Activated naive CD4-positive, alpha-beta T cell treated with anti-CD3 and anti-CD28 coated beads for 36 hours (primary cell): ENCODE measurements at regions of chr1 and their contacts with region 1.

Region 1: GRCh38 chr1:203038891-203039608 is 12.8 kb downstream of the PPFIA4 start:
- DNase-seq: peak; percentile 82
- H3K4me3 Mint-ChIP-seq: no peak overlapping the region
- H3K27ac Mint-ChIP-seq: no peak overlapping the region
- H3K4me1 Mint-ChIP-seq: no peaks in the 10 kb centered on the region
- H3K27me3 Mint-ChIP-seq: peaks cover 2% of the 10 kb centered on the region

Region 2: GRCh38 chr1:203026031-203026989 is 12.7 kb before region 1 on chr1 and contains the start of gene PPFIA4:
- CTCF ChIA-PET with region 1: interaction called, 64 read pairs
- intact Hi-C with region 1: no loop called
- DNase-seq: peak; percentile 88
- H3K4me3 Mint-ChIP-seq: peak within 1 kb of the TSS; percentile 70
- H3K27ac Mint-ChIP-seq: peak within 1 kb of the TSS; percentile 32
- H3K4me1 Mint-ChIP-seq: peaks cover 10% of the 10 kb centered on the region
- H3K27me3 Mint-ChIP-seq: peaks cover 2% of the 10 kb centered on the region
- total RNA-seq, gene PPFIA4: 4.5 to 6.5 TPM

Region 3: DNA sequence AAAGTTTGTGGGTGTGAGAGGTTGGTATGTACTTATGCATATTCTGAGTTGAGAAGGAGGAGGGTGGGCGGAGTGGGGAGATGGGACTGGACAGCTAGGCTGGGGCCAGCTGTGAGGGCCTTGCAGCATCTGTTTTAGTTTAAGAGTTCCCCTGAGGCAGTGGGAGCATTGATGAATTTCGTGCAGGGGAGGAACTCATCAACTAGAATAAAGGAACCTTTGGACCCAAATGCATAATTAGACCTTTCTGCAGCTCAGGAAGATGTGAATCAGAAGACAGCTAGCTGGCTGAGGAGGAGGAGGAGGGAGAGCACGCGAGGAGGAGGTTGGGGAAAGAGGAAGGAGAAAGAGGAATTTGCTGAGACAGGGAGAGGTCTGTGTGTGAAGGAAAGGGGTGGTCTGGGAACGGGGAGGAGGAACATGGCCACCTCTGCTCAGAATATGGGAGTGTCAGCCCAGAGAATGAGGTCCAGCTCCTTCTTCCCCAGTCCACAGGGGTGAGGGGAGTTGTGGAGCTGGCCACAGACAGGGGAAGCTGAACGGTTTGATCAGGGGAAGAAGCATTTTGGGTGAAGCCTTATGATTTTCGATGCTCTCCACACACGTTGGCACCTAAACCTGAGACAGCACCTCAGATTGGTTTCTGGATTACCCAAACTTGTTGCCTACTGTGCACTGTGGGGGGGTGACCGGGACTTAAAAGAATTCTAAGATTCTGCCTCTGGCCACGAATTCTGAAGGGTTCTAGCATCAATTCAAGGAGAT is 19.0 kb after region 1 on chr1:
- CTCF ChIA-PET with region 1: interaction called, 24 read pairs
- intact Hi-C with region 1: no loop called
- DNase-seq: no peak
- H3K4me3 Mint-ChIP-seq: no peak overlapping the region
- H3K27ac Mint-ChIP-seq: no peak overlapping the region
- H3K4me1 Mint-ChIP-seq: no peaks in the 10 kb centered on the region
- H3K27me3 Mint-ChIP-seq: no peaks in the 10 kb centered on the region

Region 4: DNA sequence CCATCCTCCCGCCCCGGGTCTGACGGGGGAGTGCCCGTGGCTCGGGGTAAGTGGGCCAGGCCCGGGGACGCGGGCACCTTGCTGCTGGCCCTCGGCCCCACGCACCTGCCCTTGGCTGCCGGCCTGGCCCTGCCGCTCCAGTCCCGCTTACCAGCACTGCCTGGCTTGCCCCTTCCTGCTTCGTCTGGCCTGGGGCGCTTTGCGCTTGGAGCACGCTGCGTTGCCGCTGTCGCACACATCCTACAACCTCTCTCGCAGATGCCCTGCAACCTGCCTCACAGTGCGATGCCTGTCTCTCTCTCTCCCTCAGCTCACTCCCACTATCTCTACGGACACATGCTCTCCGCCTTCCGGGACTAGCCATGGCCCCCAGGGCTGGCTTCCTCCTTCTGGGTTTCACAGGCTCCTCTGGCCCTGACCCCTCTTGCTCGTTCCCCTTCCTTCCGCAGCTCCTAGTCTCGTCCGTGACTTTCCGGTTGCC is 37.0 kb after region 1 on chr1:
- CTCF ChIA-PET with region 1: interaction called, 10 read pairs
- intact Hi-C with region 1: no loop called
- DNase-seq: no peak
- H3K4me3 Mint-ChIP-seq: peak overlapping the region; percentile 5
- H3K27ac Mint-ChIP-seq: no peak overlapping the region
- H3K4me1 Mint-ChIP-seq: peaks cover 4% of the 10 kb centered on the region
- H3K27me3 Mint-ChIP-seq: peaks cover 27% of the 10 kb centered on the region

Region 5: DNA sequence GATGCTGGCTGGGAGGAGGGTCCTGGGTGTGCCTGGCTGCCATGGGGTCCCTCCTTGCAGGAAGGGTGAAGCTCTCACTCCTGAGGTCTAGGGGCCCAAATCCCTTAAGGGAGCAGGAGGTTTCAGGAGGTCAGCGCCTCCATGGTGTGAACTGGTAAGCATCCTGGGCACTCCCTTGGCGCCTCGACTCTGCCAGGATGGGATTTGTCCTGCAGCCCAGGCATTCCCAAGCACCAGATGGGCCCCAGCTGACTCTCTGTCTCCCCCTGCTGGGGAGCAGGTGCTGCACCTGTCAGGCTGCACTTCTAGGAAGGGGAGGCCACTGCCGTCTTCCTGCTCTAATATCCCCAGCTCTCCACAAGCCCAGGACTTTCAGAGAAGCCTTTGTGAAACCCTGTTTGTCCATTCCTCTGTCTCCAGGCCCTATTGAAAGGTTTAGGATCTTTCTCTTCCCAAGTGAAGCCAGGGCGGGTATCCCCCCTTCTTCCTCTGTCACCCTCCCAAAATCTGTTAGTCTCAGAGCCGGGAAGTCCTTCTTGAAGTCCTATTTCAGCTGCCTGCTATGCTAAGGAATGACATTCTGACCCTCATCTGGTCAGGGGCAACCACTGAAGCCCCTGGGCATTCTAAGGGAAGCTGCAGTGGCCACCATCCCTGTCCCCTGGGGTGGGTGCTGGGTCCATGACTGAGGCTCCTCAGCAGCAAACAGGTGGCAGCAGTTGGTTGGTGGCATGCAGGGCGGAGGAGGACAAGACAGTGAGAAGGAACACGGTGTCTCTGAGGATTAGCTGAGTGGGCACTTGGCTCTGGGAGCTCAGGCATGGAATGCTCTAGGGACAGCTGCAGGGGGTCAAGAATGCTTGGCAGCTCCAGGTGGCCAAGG is 133.3 kb after region 1 on chr1:
- CTCF ChIA-PET with region 1: interaction called, 37 read pairs
- intact Hi-C with region 1: loop called (anchors 1 kb)
- DNase-seq: peak; percentile 61
- H3K4me3 Mint-ChIP-seq: no peak overlapping the region
- H3K27ac Mint-ChIP-seq: no peak overlapping the region
- H3K4me1 Mint-ChIP-seq: no peaks in the 10 kb centered on the region
- H3K27me3 Mint-ChIP-seq: no peaks in the 10 kb centered on the region

Region 6: GRCh38 chr1:203267347-203267846 is 228.3 kb after region 1 on chr1:
- CTCF ChIA-PET with region 1: interaction called, 47 read pairs
- intact Hi-C with region 1: loop called (anchors 1 kb)
- DNase-seq: peak; percentile 90
- H3K4me3 Mint-ChIP-seq: peak overlapping the region; percentile 83
- H3K27ac Mint-ChIP-seq: peak overlapping the region; percentile 85
- H3K4me1 Mint-ChIP-seq: peaks cover 19% of the 10 kb centered on the region
- H3K27me3 Mint-ChIP-seq: no peaks in the 10 kb centered on the region